GM10248 (cell line): ENCODE measurements at regions of chr11 and their contacts with region 1.

Region 1: GRCh38 chr11:118928108-118928870 is 2.6 kb upstream of the BCL9L start:
- DNase-seq: peak; percentile 95
- CTCF ChIP-seq: peak; percentile 82

Region 2: GRCh38 chr11:118696673-118697226 is 231.5 kb before region 1 on chr11:
- CTCF ChIA-PET with region 1: interaction called, 16 read pairs
- POLR2A ChIA-PET with region 1: interaction called, 3 read pairs
- DNase-seq: no peak
- CTCF ChIP-seq: no peak

Region 3: DNA sequence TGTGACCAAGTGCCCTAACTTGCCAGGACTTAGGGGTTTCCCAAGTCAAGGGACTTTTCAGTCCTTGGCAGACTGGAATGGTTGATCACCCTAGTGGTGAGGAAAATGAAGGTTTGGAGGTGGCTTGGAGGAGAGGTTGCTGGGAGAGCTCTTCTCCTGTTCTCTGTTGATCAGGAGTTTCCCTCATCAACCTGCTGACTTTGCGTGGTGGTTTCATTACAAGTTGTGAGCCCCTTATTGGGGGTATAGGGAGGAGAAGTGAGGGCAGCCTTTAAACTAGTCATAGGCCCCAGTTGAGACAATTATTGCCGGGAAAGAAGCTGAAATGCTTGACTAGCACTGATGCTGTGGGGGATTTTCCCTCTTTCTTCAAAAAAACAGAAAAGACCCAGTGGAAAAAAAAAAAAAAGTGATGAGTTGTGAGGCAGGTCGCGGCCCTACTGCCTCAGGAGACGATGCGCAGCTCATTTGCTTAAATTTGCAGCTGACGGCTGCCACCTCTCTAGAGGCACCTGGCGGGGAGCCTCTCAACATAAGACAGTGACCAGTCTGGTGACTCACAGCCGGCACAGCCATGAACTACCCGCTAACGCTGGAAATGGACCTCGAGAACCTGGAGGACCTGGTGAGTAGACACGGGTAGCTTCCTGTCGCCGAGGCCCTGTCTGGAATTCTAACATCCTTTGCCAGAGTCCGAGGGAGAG is 44.8 kb before region 1 on chr11 and contains the start of gene CXCR5:
- CTCF ChIA-PET with region 1: interaction called, 10 read pairs
- POLR2A ChIA-PET with region 1: interaction called, 3 read pairs
- DNase-seq: peak; percentile 82
- CTCF ChIP-seq: peak; percentile 11

Region 4: GRCh38 chr11:118907051-118908042 is 20.9 kb before region 1 on chr11:
- CTCF ChIA-PET with region 1: interaction called, 53 read pairs
- POLR2A ChIA-PET with region 1: no interaction called
- DNase-seq: peak; percentile 88
- CTCF ChIP-seq: peak; percentile 97

Region 5: DNA sequence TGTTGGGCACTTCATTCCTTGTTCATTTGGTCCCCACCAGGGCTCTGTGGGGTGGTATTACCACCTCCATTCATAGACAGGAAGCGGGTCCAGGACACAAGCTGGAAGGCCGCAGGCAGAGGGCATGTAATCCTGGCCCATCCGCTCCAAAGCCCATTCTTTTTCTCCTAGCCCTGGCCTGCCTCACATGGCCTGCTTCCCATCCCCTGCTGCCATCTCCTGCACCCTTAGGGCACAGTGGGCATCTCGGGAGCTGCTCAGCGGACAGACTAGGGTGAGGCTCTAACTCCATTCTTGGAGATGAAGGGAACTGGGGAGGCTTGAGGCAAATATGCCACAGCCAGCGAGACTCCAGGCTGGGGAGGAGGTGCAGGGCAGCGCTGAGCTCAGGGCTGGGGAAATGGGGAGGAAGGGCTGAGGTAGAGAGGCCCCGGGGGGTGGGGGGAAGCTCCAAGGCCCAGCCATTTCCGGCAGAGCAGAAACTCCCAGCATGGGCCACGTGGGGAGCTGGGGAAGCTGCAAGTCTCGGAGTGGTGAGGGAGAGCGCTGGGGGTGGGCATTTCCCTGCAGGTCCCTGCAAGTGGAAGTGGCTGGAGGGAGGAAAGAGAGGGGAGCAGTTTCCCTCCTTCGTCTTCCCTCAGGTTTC is 11.8 kb after region 1 on chr11:
- CTCF ChIA-PET with region 1: interaction called, 13 read pairs
- POLR2A ChIA-PET with region 1: no interaction called
- DNase-seq: peak; percentile 70
- CTCF ChIP-seq: no peak